Activated CD8-positive, alpha-beta T cell treated with anti-CD3 and anti-CD28 coated beads, Interleukin-2, amount 10 ng/mL, durations not matched to agents 7 days and 5 days (primary cell): ENCODE measurements at regions of chr3 and their contacts with region 1.

Region 1: GRCh38 chr3:101803173-101803782 is 24.3 kb downstream of the NXPE3 start:
- DNase-seq: peak; percentile 82
- ATAC-seq: peak; percentile 99
- H3K4me3 Mint-ChIP-seq: no peak overlapping the region
- H3K27ac Mint-ChIP-seq: peak overlapping the region; percentile 39
- H3K4me1 Mint-ChIP-seq: peaks cover 11% of the 10 kb centered on the region
- H3K27me3 Mint-ChIP-seq: no peaks in the 10 kb centered on the region

Region 2: DNA sequence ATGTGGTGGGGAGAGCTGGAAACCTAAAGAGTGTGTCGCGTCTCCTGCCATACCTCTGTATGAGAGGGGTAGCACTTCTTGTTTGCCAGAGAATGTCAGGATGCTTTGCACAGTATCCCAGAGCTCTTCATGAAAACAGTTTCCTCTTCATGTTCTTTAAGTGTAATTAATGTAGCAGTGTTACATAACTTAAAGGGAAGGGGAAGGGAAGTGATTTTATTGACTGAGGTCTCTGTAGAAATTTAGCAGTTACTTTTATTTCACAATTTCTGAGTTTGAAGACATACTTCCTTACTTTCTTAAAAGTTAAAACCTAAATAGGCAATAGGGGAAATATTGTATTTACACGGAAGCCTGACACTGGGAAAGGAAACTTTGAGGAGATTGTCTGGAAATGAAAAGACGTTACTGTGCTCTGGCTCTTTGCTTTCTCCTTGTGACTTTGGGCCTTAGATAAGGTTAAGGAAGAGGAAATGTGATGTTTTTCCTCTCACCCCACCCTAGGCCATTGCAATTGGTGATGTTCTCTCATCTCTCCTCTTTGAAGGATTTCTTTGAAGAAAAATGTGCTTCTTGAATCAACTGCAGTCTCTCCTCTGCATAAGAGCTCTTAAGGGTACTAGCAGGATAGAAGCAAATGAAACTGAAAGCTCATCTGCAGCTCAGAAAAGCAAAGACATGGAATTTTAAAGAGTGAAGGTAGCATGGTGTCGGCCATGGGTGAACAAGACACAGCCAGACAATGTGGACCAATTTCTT is 18.2 kb before region 1 on chr3:
- CTCF ChIA-PET with region 1: interaction called, 22 read pairs
- POLR2A ChIA-PET with region 1: no interaction called
- DNase-seq: no peak
- ATAC-seq: peak; percentile 75
- H3K4me3 Mint-ChIP-seq: peak overlapping the region; percentile 44
- H3K27ac Mint-ChIP-seq: peak overlapping the region; percentile 85
- H3K4me1 Mint-ChIP-seq: peaks cover 50% of the 10 kb centered on the region
- H3K27me3 Mint-ChIP-seq: no peaks in the 10 kb centered on the region

Region 3: GRCh38 chr3:101791778-101792177 is 11.5 kb before region 1 on chr3:
- CTCF ChIA-PET with region 1: interaction called, 22 read pairs
- POLR2A ChIA-PET with region 1: interaction called, 3 read pairs
- DNase-seq: no peak
- ATAC-seq: no peak
- H3K4me3 Mint-ChIP-seq: no peak overlapping the region
- H3K27ac Mint-ChIP-seq: no peak overlapping the region
- H3K4me1 Mint-ChIP-seq: peaks cover 16% of the 10 kb centered on the region
- H3K27me3 Mint-ChIP-seq: no peaks in the 10 kb centered on the region

Region 4: DNA sequence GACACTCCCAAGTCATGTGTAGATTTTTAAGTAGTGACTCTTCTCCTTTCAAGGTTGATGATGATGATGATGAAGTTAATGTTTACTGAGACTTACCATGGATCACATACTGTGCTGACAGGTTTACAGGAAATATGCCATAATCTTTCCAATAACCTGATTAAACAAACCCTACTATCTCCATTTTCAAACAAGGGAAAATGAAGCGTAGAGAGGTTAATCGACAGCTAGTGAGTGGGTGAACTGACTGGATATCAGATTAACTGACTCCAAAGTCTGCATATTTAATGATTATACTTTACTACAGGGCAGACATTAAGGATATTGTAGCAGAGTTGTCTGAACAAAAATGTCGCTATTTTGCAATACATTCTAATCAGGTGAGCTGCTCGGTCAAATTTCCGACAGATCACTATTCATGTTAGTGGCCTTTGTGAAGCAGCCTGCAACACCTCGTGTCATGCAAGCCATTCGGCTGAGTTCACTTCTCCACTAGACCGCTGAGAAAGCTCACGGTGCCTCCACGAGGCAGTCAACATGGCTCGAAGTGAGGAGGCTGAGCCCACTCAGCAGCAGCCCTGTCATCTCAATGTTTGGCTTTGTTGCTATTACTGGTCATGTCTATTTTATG is 310.2 kb after region 1 on chr3:
- CTCF ChIA-PET with region 1: no interaction called
- POLR2A ChIA-PET with region 1: no interaction called
- DNase-seq: no peak
- ATAC-seq: peak; percentile 38
- H3K4me3 Mint-ChIP-seq: peak overlapping the region; percentile 26
- H3K27ac Mint-ChIP-seq: peak overlapping the region; percentile 69
- H3K4me1 Mint-ChIP-seq: peaks cover 35% of the 10 kb centered on the region
- H3K27me3 Mint-ChIP-seq: no peaks in the 10 kb centered on the region